ENCODE measurements at regions of chr18 and their contacts with region 1.

Region 1: DNA sequence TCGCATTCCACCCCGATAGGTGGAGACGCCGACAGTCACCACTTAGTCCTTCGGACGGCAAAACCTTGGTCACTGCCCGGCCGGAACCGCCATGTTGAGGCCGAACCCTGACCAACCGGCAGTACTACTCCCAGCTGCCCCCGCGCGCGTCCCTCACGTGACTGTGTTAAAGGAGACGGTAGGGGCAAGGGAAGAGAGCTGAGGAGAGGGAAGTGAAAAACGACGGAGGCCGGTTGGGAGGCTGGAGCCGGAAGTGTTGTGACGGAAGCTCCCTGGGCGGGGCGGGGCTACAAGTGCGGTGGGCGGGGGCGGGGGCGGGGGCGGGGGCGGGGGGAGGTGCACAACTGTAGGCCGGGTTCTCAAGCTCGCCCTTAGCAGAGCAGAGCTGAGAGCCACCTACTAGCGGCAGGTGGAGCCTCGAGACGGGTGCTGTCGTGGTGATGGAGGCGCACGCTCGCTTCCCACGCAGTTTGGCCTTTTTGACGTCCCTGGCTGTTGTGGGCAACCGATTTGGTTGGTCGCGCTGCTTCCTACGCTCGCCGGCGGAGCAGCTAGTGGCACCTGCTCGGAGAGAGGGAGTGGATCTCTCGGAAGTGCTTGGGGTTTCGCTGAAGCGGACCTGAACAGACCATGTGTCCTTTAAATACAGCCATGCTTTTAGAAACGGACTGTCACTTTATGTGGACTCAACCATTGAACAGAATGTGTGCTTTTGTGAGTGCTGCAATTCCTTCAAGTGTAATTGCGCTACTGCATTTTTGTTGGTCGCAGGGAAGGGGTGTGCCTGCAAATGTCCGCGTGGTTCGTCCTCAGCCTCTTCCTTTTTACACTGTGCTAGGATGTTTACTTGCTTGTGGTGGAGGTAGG is at the start of gene TRAPPC8:
- DNase-seq: peak; percentile 94
- ATAC-seq: peak; percentile 82
- H3K4me3 Mint-ChIP-seq: peak within 1 kb of the TSS; percentile 100
- H3K27ac Mint-ChIP-seq: peak within 1 kb of the TSS; percentile 100
- H3K4me1 Mint-ChIP-seq: peaks cover 48% of the 10 kb centered on the region
- H3K27me3 Mint-ChIP-seq: no peaks in the 10 kb centered on the region
- CTCF ChIP-seq: no peak
- total RNA-seq, gene TRAPPC8: 62.9 and 69.2 TPM in 2 replicates

Region 2: DNA sequence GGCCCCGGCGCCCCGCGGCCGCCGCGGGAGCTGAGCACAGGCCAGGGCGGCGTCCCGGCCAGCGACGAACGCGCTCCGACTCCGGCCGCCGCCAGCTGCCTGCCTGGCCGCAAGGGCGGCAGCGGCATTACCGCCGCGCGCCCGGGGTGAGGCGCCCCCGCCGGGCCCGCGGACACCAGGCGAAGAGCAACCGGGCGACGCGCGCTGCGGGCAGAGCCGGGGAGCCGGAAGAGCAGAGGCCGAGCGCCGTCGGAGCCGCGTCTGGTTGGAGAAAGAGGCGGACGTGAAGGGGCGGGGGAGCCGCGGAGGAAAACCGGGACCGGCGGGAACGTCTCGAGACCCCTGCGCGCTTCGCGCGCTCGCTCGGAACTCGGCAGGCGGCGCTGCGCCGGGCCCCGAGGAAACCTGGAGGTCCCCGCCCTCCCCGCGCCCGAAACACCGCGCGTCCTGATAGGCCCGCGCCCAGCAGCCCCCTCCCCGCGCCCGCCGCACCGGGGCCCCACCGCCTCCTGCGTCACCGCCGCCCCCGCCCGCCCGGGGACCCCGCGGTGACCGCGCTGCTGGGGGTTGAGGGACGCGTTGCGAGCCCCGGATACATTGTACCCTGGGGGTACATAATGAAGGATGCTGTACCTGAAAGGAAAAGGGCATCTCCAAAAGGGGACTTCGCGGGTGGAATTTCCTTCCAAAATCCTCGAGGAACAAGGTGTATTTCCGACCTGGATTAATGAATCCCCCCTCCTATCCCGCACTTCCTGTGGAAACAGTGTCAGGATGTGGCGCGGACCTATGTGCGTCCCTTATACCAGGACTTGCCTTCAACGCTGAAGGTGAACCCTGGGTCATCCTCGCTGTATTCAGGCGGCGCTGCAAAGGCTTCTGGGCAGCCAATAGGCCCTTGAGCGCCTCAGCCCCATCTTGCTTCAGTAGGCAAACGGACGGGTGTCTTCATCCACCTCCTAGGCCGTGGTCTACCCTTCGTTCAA is 257.8 kb before region 1 on chr18:
- CTCF ChIA-PET with region 1: interaction called, 3 read pairs
- POLR2A ChIA-PET with region 1: no interaction called
- intact Hi-C with region 1: loop called (anchors 1 kb)
- DNase-seq: peak; percentile 56
- ATAC-seq: peak; percentile 80
- H3K4me3 Mint-ChIP-seq: peak overlapping the region; percentile 82
- H3K27ac Mint-ChIP-seq: peak overlapping the region; percentile 56
- H3K4me1 Mint-ChIP-seq: peaks cover 17% of the 10 kb centered on the region
- H3K27me3 Mint-ChIP-seq: peaks cover 21% of the 10 kb centered on the region
- CTCF ChIP-seq: no peak

Region 3: DNA sequence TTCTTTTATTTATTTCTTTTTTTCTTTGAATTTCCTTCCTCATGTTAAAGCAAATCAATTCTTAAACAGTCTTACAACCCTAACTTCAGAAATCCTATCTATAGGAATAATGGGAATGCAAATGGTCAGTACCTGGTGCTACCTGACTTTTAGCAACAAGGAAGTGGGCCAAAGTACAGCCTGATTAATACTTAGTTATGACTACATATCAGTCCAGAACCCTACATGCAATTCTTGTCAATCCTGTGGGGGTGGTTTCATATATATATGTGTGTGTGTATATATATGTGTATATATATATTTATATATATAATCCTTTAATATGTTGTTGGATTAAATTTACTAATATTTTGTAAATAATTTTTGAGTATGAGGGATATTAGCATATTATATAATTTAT is 14.5 kb after region 1 on chr18:
- CTCF ChIA-PET with region 1: interaction called, 7 read pairs
- POLR2A ChIA-PET with region 1: interaction called, 6 read pairs
- intact Hi-C with region 1: loop called (anchors 1 kb)
- DNase-seq: no peak
- ATAC-seq: no peak
- H3K4me3 Mint-ChIP-seq: no peak overlapping the region
- H3K27ac Mint-ChIP-seq: no peak overlapping the region
- H3K4me1 Mint-ChIP-seq: no peaks in the 10 kb centered on the region
- H3K27me3 Mint-ChIP-seq: peaks cover 2% of the 10 kb centered on the region
- CTCF ChIP-seq: no peak

Region 4: GRCh38 chr18:32018331-32019250 is 75.4 kb after region 1 on chr18 and contains the start of gene RNF125:
- CTCF ChIA-PET with region 1: interaction called, 11 read pairs
- POLR2A ChIA-PET with region 1: interaction called, 66 read pairs
- intact Hi-C with region 1: loop called (anchors 1 kb)
- DNase-seq: peak; percentile 73
- ATAC-seq: peak; percentile 85
- H3K4me3 Mint-ChIP-seq: peak within 1 kb of the TSS; percentile 93
- H3K27ac Mint-ChIP-seq: peak within 1 kb of the TSS; percentile 89
- H3K4me1 Mint-ChIP-seq: peaks cover 21% of the 10 kb centered on the region
- H3K27me3 Mint-ChIP-seq: no peaks in the 10 kb centered on the region
- CTCF ChIP-seq: no peak
- total RNA-seq, gene RNF125: 2.1 and 3.1 TPM in 2 replicates

Region 5: DNA sequence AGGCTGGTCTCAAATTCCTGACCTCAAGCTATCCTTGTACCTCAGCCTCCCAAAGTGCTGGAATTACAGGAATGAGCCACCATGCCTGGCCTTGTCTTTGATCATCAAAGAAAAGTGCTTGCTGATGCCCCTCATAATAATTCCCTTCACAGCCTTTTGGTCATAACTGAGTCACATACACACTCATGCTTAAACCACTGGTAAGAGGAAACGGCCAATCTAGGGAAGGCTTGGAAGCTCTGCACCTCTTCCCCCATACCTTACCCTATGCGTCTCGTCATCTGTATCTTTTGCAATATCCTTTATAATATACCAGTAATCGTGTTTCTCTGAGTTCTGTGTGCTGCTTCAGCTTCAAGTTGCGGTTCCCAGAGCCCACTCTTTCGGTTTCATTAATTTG is 143.6 kb after region 1 on chr18:
- CTCF ChIA-PET with region 1: no interaction called
- POLR2A ChIA-PET with region 1: interaction called, 110 read pairs
- intact Hi-C with region 1: loop called (anchors 1 kb)
- DNase-seq: no peak
- ATAC-seq: no peak
- H3K4me3 Mint-ChIP-seq: no peak overlapping the region
- H3K27ac Mint-ChIP-seq: no peak overlapping the region
- H3K4me1 Mint-ChIP-seq: peaks cover 23% of the 10 kb centered on the region
- H3K27me3 Mint-ChIP-seq: no peaks in the 10 kb centered on the region
- CTCF ChIP-seq: no peak

Region 6: DNA sequence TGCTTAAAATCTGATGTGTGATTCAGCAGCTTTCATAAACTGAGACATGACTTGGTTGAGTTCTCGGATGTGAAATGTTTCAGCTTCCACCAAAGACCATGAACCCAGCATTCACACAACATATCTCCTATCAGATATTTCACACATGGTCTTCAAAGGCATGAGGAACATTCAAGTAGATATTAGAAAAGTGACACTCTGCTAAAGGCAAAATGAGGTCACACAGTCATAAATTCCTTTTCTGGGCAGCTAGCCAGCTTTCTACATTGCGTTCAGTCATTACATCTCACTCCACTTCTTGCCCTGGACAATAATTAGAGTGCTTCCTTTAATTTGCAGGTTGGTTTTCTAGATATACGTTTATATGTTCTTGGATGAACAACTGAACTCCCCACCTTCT is 430.8 kb after region 1 on chr18:
- CTCF ChIA-PET with region 1: no interaction called
- POLR2A ChIA-PET with region 1: no interaction called
- intact Hi-C with region 1: no loop called
- DNase-seq: no peak
- ATAC-seq: no peak
- H3K4me3 Mint-ChIP-seq: no peak overlapping the region
- H3K27ac Mint-ChIP-seq: no peak overlapping the region
- H3K4me1 Mint-ChIP-seq: no peaks in the 10 kb centered on the region
- H3K27me3 Mint-ChIP-seq: peaks cover 2% of the 10 kb centered on the region
- CTCF ChIP-seq: no peak

Measured in activated B cell treated with CpG ODN at 0.5 μM for 24 hours (primary cell).